ENCODE measurements at regions of chr12 and their contacts with region 1.

Region 1: GRCh38 chr12:128829861-128830504 is 6.2 kb upstream of the SLC15A4 start:
- DNase-seq: peak; percentile 97
- ATAC-seq: peak; percentile 86
- H3K4me3 ChIP-seq: peak overlapping the region; percentile 35; the same call in 1 of the 2 replicates
- H3K27ac ChIP-seq: peak overlapping the region; percentile 98
- H3K4me1 ChIP-seq: peaks cover 28% of the 10 kb centered on the region
- H3K27me3 ChIP-seq: no peaks in the 10 kb centered on the region
- CTCF ChIP-seq: no peak
- EP300 ChIP-seq: peak; percentile 88 to 96
- POLR2A ChIP-seq: no peak
- RAD21 ChIP-seq: no peak

Region 2: GRCh38 chr12:128797119-128798118 is 32.6 kb before region 1 on chr12:
- CTCF ChIA-PET with region 1: interaction called, 33 read pairs
- POLR2A ChIA-PET with region 1: interaction called, 19 read pairs
- RAD21 ChIA-PET with region 1: interaction called, 51 read pairs
- SMC1A ChIA-PET with region 1: interaction called, 55 read pairs
- in situ Hi-C with region 1: no loop called
- intact Hi-C with region 1: no loop called
- DNase-seq: no peak
- ATAC-seq: peak; percentile 82
- H3K4me3 ChIP-seq: peak overlapping the region; percentile 5; the same call in 1 of the 2 replicates
- H3K27ac ChIP-seq: peak overlapping the region; percentile 99
- H3K4me1 ChIP-seq: peaks cover 60% of the 10 kb centered on the region
- H3K27me3 ChIP-seq: no peaks in the 10 kb centered on the region
- CTCF ChIP-seq: no peak; a peak in 1 of 6 replicates
- EP300 ChIP-seq: peak in 1 of 2 experiments; percentile 26; a peak in 1 of 4 replicates
- POLR2A ChIP-seq: peak; percentile 39
- RAD21 ChIP-seq: peak; percentile 29; the same call in 1 of the 2 replicates

Region 3: DNA sequence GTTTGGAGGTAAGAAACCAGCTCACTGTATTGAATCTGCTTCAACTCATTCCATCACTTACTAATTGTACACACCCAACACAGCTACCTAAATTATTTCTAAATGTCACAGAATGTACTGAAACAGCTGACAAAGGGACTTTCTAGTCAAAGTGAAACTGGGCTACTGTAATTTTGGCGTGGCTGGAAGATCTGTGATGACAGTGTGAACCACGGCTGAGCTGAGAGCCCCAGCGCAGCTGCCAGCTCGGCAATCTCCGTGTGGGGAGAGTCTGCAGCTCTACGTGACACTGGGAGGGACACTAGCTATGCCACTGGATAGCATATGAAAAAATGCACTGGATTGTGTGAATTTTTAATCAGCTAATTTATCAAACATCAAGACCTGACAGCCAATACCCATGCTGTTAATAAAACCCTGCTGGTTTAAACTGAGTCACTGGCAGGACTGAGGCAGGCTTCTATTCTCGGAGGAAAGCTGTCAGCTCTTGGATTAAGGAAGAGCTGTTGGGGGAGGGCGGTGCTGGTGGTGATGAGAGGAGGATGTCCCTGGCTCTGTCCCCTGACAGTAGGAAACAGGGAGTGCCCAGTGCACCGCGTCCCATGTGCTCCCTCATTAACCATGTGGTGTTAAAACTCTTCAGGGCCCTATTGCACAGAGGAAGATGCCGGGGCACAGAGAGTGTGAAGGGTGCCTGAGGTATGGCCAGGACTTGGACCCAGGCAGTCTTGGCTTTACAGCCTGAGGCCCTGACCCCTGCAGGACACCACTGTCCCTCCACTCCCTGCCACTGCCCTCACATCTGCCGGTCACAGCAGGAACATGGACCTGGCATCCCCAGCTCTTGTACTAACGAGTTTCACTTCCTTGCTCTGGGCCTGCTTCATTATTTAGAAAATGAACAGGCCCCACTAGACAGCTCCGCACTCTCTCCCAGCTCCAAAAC is 19.5 kb before region 1 on chr12:
- CTCF ChIA-PET with region 1: interaction called, 28 read pairs
- POLR2A ChIA-PET with region 1: interaction called, 45 read pairs
- RAD21 ChIA-PET with region 1: interaction called, 66 read pairs
- SMC1A ChIA-PET with region 1: interaction called, 62 read pairs
- in situ Hi-C with region 1: no loop called
- intact Hi-C with region 1: loop called (anchors 1 kb)
- DNase-seq: peak; percentile 92
- ATAC-seq: peak; percentile 84
- H3K4me3 ChIP-seq: peak overlapping the region; percentile 55
- H3K27ac ChIP-seq: peak overlapping the region; percentile 94
- H3K4me1 ChIP-seq: peaks cover 61% of the 10 kb centered on the region
- H3K27me3 ChIP-seq: no peaks in the 10 kb centered on the region
- CTCF ChIP-seq: peak; percentile 10 to 31 (median 14); a peak in 1 of 6 replicates
- EP300 ChIP-seq: peak; percentile 64 to 93
- POLR2A ChIP-seq: peak; percentile 79
- RAD21 ChIP-seq: peak; percentile 32; the same call in 1 of the 2 replicates

Region 4: DNA sequence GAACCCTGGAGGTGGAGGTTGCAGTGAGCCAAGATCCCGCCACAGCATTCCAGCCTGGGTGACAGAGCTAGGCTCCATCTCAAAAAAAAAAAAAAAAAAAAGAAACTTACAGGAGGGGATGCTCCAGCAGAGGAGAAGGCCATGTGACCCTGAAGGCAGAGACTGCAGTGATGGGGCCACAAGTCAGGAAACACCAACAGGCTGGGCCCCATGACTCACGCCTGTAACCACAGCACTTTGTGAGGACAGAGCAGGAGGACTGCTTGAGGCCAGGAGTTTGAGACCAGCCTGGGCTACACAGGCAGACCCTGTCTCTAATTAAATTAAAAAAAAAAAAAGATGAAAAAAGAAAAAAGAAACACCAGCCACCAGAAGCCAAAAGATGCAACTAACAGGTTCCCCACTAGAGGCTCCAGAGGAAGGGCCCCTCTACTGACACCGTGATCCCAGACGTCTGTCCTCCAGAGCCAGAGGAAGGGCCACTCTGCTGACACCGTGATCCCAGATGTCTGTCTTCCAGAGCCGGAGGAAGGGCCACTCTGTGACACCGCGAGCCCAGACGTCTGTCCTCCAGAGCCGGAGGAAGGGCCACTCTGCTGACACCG is 14.2 kb after region 1 on chr12:
- CTCF ChIA-PET with region 1: interaction called, 8 read pairs
- POLR2A ChIA-PET with region 1: interaction called, 20 read pairs
- RAD21 ChIA-PET with region 1: interaction called, 20 read pairs
- SMC1A ChIA-PET with region 1: interaction called, 47 read pairs
- in situ Hi-C with region 1: no loop called
- intact Hi-C with region 1: loop called (anchors 1 kb)
- DNase-seq: no peak
- ATAC-seq: peak; percentile 73
- H3K4me3 ChIP-seq: no peak overlapping the region
- H3K27ac ChIP-seq: no peak overlapping the region
- H3K4me1 ChIP-seq: peaks cover 32% of the 10 kb centered on the region
- H3K27me3 ChIP-seq: no peaks in the 10 kb centered on the region
- CTCF ChIP-seq: peak; percentile 24 to 44 (median 25); a peak in 3 of 6 replicates
- EP300 ChIP-seq: no peak
- POLR2A ChIP-seq: no peak
- RAD21 ChIP-seq: peak; percentile 40

Region 5: DNA sequence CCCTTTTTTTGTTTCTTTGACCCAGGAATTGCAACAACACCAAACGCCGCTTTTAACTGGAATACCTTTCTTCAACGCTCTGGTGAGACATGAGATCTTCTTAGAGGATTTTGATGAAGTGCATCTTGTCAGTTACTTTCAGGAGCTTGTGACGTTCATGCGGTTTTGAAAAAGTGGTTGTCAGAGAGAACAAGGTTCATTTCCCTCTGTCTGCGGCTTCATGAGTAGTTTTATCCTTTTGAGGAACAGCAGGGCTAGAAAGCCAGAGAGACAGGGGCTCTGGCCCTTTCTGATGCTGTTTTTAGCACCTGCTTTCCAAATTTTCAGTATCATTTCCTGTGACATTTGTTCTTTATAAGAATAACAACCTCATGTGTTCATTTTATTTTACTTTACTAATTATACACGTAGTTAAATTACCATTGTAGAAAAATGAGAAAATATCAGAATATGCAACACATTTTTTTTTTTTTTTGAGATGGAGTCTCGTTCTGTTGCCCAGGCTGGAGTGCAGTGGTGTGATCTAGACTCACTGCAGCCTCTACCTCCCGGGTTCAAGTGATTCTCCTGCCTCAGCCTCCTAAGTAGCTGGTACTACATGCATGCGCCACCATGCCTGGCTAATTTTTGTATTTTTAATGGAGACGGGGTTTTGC is 85.1 kb after region 1 on chr12:
- CTCF ChIA-PET with region 1: interaction called, 8 read pairs
- POLR2A ChIA-PET with region 1: interaction called, 17 read pairs
- RAD21 ChIA-PET with region 1: interaction called, 35 read pairs
- SMC1A ChIA-PET with region 1: interaction called, 36 read pairs
- in situ Hi-C with region 1: no loop called
- intact Hi-C with region 1: loop called (anchors 1 kb)
- DNase-seq: peak; percentile 88
- ATAC-seq: peak; percentile 95
- H3K4me3 ChIP-seq: no peak overlapping the region
- H3K27ac ChIP-seq: no peak overlapping the region
- H3K4me1 ChIP-seq: peaks cover 9% of the 10 kb centered on the region; the same call in 1 of the 2 replicates
- H3K27me3 ChIP-seq: no peaks in the 10 kb centered on the region
- CTCF ChIP-seq: no peak
- EP300 ChIP-seq: peak; percentile 95 to 98
- POLR2A ChIP-seq: no peak
- RAD21 ChIP-seq: no peak